Ovary (tissue), 10 donors: ENCODE measurements at regions of chr1 and their contacts with region 1.

Region 1: DNA sequence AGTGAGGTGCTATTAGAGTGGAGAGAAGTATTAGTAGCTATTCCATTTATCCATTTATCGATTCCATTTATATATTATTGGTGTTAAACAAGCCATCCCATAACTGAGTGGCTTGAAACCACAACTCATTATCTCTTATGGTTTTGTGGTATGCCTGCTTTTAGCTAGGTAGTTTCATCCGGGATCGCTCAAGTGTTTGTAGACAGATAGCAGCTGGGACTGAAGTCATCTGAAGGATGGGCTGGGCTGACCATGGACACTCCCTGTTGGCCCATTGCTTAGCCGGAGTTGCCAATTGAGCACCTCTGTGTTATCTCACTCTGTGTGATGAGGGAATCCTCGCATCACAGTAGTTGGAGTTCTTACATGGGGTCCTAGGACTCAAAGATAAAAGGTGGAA is 622.5 kb downstream of the PLA2G4A start:
- DNase-seq: no peak
- H3K4me3 ChIP-seq: no peak overlapping the region
- H3K27ac ChIP-seq: no peak overlapping the region
- H3K4me1 ChIP-seq: no peaks in the 10 kb centered on the region
- H3K27me3 ChIP-seq: no peaks in the 10 kb centered on the region
- CTCF ChIP-seq: no peak
- EP300 ChIP-seq: no peak
- POLR2A ChIP-seq: no peak

Region 2: GRCh38 chr1:187042541-187042940 is 408.7 kb before region 1 on chr1:
- intact Hi-C with region 1: loop called in 1 of 4 experiments (anchors 10 kb)
- DNase-seq: no peak
- H3K4me3 ChIP-seq: no peak overlapping the region
- H3K27ac ChIP-seq: no peak overlapping the region
- H3K4me1 ChIP-seq: no peaks in the 10 kb centered on the region
- H3K27me3 ChIP-seq: no peaks in the 10 kb centered on the region
- CTCF ChIP-seq: no peak
- EP300 ChIP-seq: no peak
- POLR2A ChIP-seq: no peak

Region 3: DNA sequence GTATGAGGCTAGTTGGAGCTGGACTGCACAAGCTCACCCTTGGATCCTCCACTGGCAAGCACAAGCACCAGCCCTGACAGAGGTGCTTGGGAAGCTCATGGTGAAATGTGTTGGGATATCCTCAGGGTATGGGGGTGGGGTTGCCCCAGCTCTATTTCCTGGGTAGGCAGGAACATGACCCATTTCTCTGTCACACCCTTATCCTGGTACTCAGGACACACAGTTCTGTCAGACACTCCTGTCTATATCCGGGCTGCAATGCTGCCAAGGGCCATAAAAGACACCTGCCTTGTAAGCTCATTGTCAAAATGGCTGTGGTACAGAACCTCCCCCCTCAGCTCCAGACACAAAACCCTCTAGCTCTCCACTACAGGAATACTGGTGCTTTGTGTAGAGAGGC is 14.1 kb after region 1 on chr1:
- intact Hi-C with region 1: no loop called
- DNase-seq: no peak
- H3K4me3 ChIP-seq: no peak overlapping the region
- H3K27ac ChIP-seq: no peak overlapping the region
- H3K4me1 ChIP-seq: no peaks in the 10 kb centered on the region
- H3K27me3 ChIP-seq: no peaks in the 10 kb centered on the region
- CTCF ChIP-seq: no peak
- EP300 ChIP-seq: no peak
- POLR2A ChIP-seq: no peak